PC-3 (cell line): ENCODE measurements at regions of chr19 and their contacts with region 1.

Region 1: GRCh38 chr19:37997911-37998344 is 90.9 kb downstream of the SIPA1L3 start:
- DNase-seq: peak; percentile 97
- ATAC-seq: peak; percentile 48
- H3K4me3 ChIP-seq: no peak overlapping the region
- H3K27ac ChIP-seq: peak overlapping the region; percentile 96
- H3K4me1 ChIP-seq: peaks cover 31% of the 10 kb centered on the region
- H3K27me3 ChIP-seq: no peaks in the 10 kb centered on the region
- CTCF ChIP-seq: no peak

Region 2: GRCh38 chr19:37931881-37932655 is 65.9 kb before region 1 on chr19:
- CTCF ChIA-PET with region 1: interaction called, 3 read pairs
- POLR2A ChIA-PET with region 1: no interaction called
- intact Hi-C with region 1: loop called (anchors 1 kb)
- DNase-seq: peak; percentile 92
- ATAC-seq: peak; percentile 73
- H3K4me3 ChIP-seq: peak overlapping the region; percentile 64
- H3K27ac ChIP-seq: peak overlapping the region; percentile 87
- H3K4me1 ChIP-seq: peaks cover 38% of the 10 kb centered on the region
- H3K27me3 ChIP-seq: no peaks in the 10 kb centered on the region
- CTCF ChIP-seq: no peak

Region 3: GRCh38 chr19:38044267-38045111 is 46.6 kb after region 1 on chr19:
- CTCF ChIA-PET with region 1: no interaction called
- POLR2A ChIA-PET with region 1: no interaction called
- intact Hi-C with region 1: loop called (anchors 1 kb)
- DNase-seq: peak; percentile 13
- ATAC-seq: no peak
- H3K4me3 ChIP-seq: no peak overlapping the region
- H3K27ac ChIP-seq: no peak overlapping the region
- H3K4me1 ChIP-seq: peaks cover 7% of the 10 kb centered on the region
- H3K27me3 ChIP-seq: no peaks in the 10 kb centered on the region
- CTCF ChIP-seq: peak; percentile 47